ENCODE measurements at regions of chrX and their contacts with region 1.

Region 1: GRCh38 chrX:14015294-14015693 is 14.4 kb downstream of the GEMIN8 start:
- DNase-seq: no peak
- H3K4me3 Mint-ChIP-seq: no peak overlapping the region
- H3K27ac Mint-ChIP-seq: no peak overlapping the region
- H3K4me1 Mint-ChIP-seq: peaks cover 8% of the 10 kb centered on the region
- H3K27me3 Mint-ChIP-seq: no peaks in the 10 kb centered on the region
- CTCF ChIP-seq: no peak

Region 2: GRCh38 chrX:13965531-13965930 is 49.8 kb before region 1 on chrX:
- CTCF ChIA-PET with region 1: no interaction called
- POLR2A ChIA-PET with region 1: no interaction called
- intact Hi-C with region 1: loop called (anchors 1 kb)
- DNase-seq: no peak
- H3K4me3 Mint-ChIP-seq: no peak overlapping the region
- H3K27ac Mint-ChIP-seq: no peak overlapping the region
- H3K4me1 Mint-ChIP-seq: no peaks in the 10 kb centered on the region
- H3K27me3 Mint-ChIP-seq: peaks cover 65% of the 10 kb centered on the region
- CTCF ChIP-seq: no peak

Measured in MCF 10A (cell line).